CD8-positive, alpha-beta memory T cell (primary cell): ENCODE measurements at regions of chr2 and their contacts with region 1.

Region 1: DNA sequence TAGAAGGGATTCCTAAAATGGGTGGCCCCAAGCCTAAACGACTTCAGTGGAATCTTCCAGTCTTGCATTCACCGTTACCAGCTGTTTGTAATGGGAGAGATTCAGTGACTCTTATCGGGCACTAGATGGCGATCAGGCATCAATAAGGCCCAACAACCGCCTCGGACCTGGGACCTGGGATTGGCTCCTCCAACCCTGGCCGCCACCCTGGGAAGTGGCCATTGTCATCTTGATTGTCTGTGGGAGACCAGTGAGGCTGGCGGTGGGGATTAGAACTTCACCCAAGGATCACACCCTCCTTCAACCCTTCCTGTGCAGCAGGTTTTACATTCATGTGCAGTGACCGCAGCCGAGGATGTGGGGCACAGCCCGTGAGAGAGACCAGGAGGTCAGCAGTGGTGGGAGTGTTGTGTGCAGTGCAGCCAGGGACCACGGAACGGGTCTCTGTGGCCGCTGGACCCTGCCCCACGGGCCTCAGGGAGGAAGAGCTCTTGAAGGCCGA is 85.3 kb downstream of the SPP2 start:
- DNase-seq: peak in 4 of 5 donors; percentile 34 to 60 (median 40)
- H3K4me3 ChIP-seq: no peak overlapping the region
- H3K4me3 Mint-ChIP-seq: peak overlapping the region in 3 of 7 donors; percentile 8 to 73 (median 23)
- H3K27ac ChIP-seq: no peak overlapping the region
- H3K27ac Mint-ChIP-seq: peak overlapping the region; percentile 33 to 95 (median 85)
- H3K4me1 ChIP-seq: peaks cover 27% of the 10 kb centered on the region
- H3K4me1 Mint-ChIP-seq: peaks cover 32 to 41% (median 35%) of the 10 kb centered on the region in 3 donors
- H3K27me3 ChIP-seq: no peaks in the 10 kb centered on the region
- H3K27me3 Mint-ChIP-seq: peaks cover 0 to 1% of the 10 kb centered on the region in 2 donors

Region 2: GRCh38 chr2:233867993-233868532 is 267.7 kb before region 1 on chr2 and contains the start of gene MSL3B:
- CTCF ChIA-PET with region 1: no interaction called
- POLR2A ChIA-PET with region 1: interaction called, 11 read pairs
- DNase-seq: peak; percentile 44 to 73 (median 57)
- H3K4me3 ChIP-seq: peak within 1 kb of the TSS; percentile 72
- H3K4me3 Mint-ChIP-seq: peak within 1 kb of the TSS; percentile 84 to 91 (median 87)
- H3K27ac ChIP-seq: peak within 1 kb of the TSS; percentile 51
- H3K27ac Mint-ChIP-seq: peak within 1 kb of the TSS in 6 of 8 donors; percentile 36 to 87 (median 76)
- H3K4me1 ChIP-seq: no peaks in the 10 kb centered on the region
- H3K4me1 Mint-ChIP-seq: peaks cover 7 to 18% (median 12%) of the 10 kb centered on the region in 3 donors
- H3K27me3 ChIP-seq: peaks cover 4% of the 10 kb centered on the region
- H3K27me3 Mint-ChIP-seq: peaks cover 19 to 33% of the 10 kb centered on the region in 2 donors

Region 3: DNA sequence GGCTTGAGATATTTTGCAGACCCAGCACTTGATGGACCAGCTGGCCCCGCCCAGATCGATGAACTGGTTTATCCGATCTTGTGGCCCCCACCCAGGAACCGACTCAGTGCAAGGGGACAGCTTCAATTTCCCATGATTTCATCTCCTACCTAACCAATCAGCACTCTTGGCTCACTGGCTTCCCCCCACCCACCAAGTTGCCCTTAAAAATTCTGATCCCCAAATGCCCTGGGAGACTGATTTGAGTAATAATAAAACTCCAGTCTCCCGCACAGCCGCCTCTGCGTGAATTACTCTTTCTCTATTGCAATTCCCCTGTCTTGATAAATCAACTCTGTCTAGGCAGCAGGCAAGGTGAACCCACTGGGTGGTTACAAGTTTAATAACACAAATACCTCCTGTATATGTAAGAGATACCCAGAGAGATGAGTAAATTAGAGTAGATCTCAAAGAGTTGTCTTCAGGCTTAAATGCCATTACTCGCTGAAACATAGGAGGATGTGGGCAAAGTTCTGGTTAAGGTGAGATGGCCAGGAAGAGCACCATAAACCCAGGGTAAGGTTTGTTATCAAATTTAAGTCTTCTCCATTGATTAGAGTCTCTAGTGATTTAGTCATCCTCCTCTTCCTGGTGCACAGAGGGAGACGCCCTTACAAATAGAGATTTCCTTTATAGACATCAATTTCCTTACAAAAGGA is 138.3 kb after region 1 on chr2:
- CTCF ChIA-PET with region 1: no interaction called
- POLR2A ChIA-PET with region 1: no interaction called
- DNase-seq: peak in 2 of 5 donors; percentile 44 to 61
- H3K4me3 ChIP-seq: no peak overlapping the region
- H3K4me3 Mint-ChIP-seq: peak overlapping the region; percentile 1 to 80 (median 57)
- H3K27ac ChIP-seq: no peak overlapping the region
- H3K27ac Mint-ChIP-seq: peak overlapping the region; percentile 57 to 98 (median 87)
- H3K4me1 ChIP-seq: peaks cover 41% of the 10 kb centered on the region
- H3K4me1 Mint-ChIP-seq: peaks cover 69 to 83% (median 80%) of the 10 kb centered on the region in 3 donors
- H3K27me3 ChIP-seq: no peaks in the 10 kb centered on the region
- H3K27me3 Mint-ChIP-seq: no peaks in the 10 kb centered on the region

Region 4: DNA sequence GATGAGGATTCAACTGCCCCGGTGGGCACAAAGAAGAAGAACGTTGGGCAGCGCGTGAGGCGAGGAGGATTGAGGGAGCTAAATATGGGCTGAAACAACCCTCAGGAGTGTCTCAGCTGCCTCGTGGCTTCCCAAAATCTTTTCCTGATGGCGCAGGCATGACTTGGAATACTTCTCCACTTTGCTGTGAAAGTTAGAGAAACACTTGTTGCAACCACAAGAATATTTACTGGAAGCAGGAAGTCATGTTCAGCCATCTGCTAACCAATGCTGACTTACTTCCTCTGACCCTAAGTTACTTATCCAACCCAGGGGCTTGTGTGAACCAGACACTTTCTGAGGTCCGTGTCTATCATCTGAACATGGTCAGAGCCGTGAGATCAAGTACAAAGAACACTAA is 212.3 kb after region 1 on chr2:
- CTCF ChIA-PET with region 1: no interaction called
- POLR2A ChIA-PET with region 1: no interaction called
- DNase-seq: no peak
- H3K4me3 ChIP-seq: no peak overlapping the region
- H3K4me3 Mint-ChIP-seq: peak overlapping the region in 1 of 7 donors; percentile 9
- H3K27ac ChIP-seq: no peak overlapping the region
- H3K27ac Mint-ChIP-seq: peak overlapping the region in 6 of 8 donors; percentile 27 to 83 (median 40)
- H3K4me1 ChIP-seq: peaks cover 11% of the 10 kb centered on the region
- H3K4me1 Mint-ChIP-seq: peaks cover 17 to 42% (median 39%) of the 10 kb centered on the region in 3 donors
- H3K27me3 ChIP-seq: no peaks in the 10 kb centered on the region
- H3K27me3 Mint-ChIP-seq: no peaks in the 10 kb centered on the region

Region 5: DNA sequence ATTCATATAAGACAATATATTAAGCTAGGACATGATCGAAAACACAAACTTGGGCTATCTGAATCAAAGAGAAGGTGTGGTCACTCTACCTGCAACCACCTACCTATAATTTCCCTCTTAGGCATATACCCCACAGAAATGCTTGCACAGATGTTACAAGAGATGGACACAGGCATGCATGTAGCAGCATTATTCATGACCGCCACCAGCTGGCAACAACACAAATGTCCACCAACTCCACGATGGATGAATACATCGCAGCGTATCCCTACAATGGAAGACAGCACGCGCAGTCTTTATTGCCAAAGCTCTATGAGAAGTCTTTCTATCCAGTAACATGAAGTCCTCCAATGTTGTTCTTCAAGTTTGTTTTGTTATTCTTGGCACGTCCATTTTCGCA is 270.3 kb after region 1 on chr2:
- CTCF ChIA-PET with region 1: no interaction called
- POLR2A ChIA-PET with region 1: no interaction called
- DNase-seq: no peak
- H3K4me3 ChIP-seq: no peak overlapping the region
- H3K4me3 Mint-ChIP-seq: no peak overlapping the region
- H3K27ac ChIP-seq: no peak overlapping the region
- H3K27ac Mint-ChIP-seq: peak overlapping the region in 3 of 8 donors; percentile 6 to 29 (median 18)
- H3K4me1 ChIP-seq: peaks cover 14% of the 10 kb centered on the region
- H3K4me1 Mint-ChIP-seq: peaks cover 12 to 25% (median 19%) of the 10 kb centered on the region in 3 donors
- H3K27me3 ChIP-seq: no peaks in the 10 kb centered on the region
- H3K27me3 Mint-ChIP-seq: no peaks in the 10 kb centered on the region

Region 6: DNA sequence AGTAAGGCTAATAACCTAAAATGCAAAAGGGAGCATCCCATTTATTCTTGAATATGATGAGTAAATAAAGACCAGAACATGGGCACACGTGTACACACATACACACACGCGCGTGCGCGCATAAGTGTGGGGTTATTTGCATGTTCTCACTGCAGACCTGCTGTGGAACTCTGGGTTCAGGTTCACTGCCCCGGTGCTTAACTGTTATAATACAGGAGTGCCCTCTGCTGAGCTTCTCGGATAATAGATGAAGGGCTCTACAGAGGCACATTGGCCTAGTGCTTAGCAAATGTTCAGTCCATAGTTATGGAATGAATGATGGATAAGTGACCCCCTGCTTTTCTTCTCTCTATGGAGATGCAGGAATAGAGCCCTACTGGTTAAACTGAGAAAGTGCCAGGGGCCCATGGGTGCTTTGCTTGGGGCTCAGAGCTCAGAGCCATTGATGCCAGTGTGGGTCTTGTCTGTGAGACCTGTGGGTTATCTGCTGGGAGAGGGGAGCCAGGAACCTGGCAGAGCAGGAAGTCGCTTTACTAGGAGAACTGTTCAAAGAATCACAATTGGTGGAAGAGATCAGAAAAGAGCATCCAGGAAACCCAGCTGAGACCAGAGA is 364.7 kb after region 1 on chr2:
- CTCF ChIA-PET with region 1: interaction called, 47 read pairs
- POLR2A ChIA-PET with region 1: interaction called, 6 read pairs
- DNase-seq: peak; percentile 60 to 86 (median 71)
- H3K4me3 ChIP-seq: no peak overlapping the region
- H3K4me3 Mint-ChIP-seq: peak overlapping the region; percentile 21 to 88 (median 67)
- H3K27ac ChIP-seq: no peak overlapping the region
- H3K27ac Mint-ChIP-seq: peak overlapping the region; percentile 85 to 99 (median 96)
- H3K4me1 ChIP-seq: peaks cover 33% of the 10 kb centered on the region
- H3K4me1 Mint-ChIP-seq: peaks cover 30 to 32% (median 31%) of the 10 kb centered on the region in 3 donors
- H3K27me3 ChIP-seq: no peaks in the 10 kb centered on the region
- H3K27me3 Mint-ChIP-seq: peaks cover 0 to 11% of the 10 kb centered on the region in 2 donors

Region 7: GRCh38 chr2:234544659-234545611 is 409.2 kb after region 1 on chr2:
- CTCF ChIA-PET with region 1: interaction called, 11 read pairs
- POLR2A ChIA-PET with region 1: interaction called, 3 read pairs
- DNase-seq: peak; percentile 62 to 82 (median 67)
- H3K4me3 ChIP-seq: no peak overlapping the region
- H3K4me3 Mint-ChIP-seq: no peak overlapping the region
- H3K27ac ChIP-seq: no peak overlapping the region
- H3K27ac Mint-ChIP-seq: peak overlapping the region in 1 of 8 donors; percentile 43
- H3K4me1 ChIP-seq: no peaks in the 10 kb centered on the region
- H3K4me1 Mint-ChIP-seq: peaks cover 4 to 11% (median 7%) of the 10 kb centered on the region in 3 donors
- H3K27me3 ChIP-seq: no peaks in the 10 kb centered on the region
- H3K27me3 Mint-ChIP-seq: peaks cover 9 to 37% of the 10 kb centered on the region in 2 donors